Spleen (tissue), 13 donors: ENCODE measurements at regions of chr4 and their contacts with region 1.

Region 1: DNA sequence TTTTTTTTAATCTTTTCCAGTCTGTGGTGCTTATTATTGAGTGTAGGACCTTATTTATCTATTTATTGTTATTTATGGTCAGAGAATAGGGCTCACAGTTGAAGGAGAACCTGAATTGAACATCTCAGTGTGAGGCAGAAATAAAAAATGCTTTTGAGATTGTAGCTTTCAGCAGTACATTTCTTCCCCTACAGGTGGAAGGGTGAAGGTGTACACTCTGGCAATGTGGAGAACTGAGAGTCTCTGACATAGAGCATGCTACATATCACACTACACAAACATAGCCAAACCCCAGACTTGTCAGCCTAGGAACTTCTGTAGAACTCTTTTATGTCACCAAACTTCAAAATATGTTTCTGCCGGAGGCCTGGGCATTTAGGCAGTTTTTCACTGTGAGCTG is 140.2 kb downstream of the STIM2 start:
- DNase-seq: no peak
- H3K4me3 ChIP-seq: no peak overlapping the region
- H3K27ac ChIP-seq: no peak overlapping the region
- H3K4me1 ChIP-seq: peaks cover 0 to 36% (median 13%) of the 10 kb centered on the region in 6 donors
- H3K27me3 ChIP-seq: no peaks in the 10 kb centered on the region
- CTCF ChIP-seq: peak in 6 of 11 experiments; percentile 6 to 47 (median 24)
- POLR2A ChIP-seq: no peak

Region 2: DNA sequence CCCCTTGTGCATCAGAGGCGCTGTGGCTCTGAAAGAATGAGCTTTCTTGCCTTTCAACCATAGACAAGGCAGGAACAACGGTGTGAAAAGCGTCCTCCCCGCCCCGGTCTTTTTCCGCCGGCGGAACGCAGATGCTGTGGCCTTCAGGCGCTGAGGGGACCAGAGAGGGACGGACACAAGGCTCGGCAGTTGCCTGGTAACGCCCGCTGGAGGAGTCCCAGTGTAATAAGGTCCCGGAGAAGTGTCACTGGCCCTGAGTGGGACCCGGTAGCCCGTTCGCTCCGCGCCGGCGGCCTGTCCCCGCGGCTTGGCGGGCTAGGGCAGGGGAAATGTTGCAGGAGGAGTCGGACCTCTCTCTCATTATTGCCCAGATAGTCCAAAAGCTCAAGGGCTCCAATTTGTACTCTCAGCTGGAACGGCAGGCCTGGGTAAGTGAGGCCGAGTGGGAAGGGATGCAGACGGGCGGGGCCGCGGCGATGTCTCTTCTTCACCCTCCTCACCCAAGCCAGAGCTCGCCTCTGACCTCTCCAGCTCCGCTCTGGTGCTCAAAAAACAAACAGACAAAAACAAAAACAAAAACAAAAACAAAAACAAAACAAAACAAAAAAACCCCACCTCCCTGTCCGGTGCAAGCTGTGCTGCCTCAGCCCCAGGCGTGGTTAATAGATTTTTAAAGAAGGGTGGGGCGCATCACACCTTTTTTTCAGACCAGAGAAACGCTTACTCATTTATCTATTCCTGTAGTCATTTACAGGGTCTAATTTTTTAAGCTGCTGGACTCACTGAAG is 416.8 kb before region 1 on chr4 and contains the start of gene TBC1D19:
- intact Hi-C with region 1: loop called (anchors 10 kb)
- DNase-seq: peak; percentile 97
- H3K4me3 ChIP-seq: peak within 1 kb of the TSS; percentile 61 to 94 (median 76)
- H3K27ac ChIP-seq: peak within 1 kb of the TSS; percentile 67 to 92 (median 82)
- H3K4me1 ChIP-seq: peaks cover 8 to 27% (median 16%) of the 10 kb centered on the region in 6 donors
- H3K27me3 ChIP-seq: no peaks in the 10 kb centered on the region
- CTCF ChIP-seq: no peak
- POLR2A ChIP-seq: peak in 1 of 3 donors; percentile 28
- total RNA-seq, gene TBC1D19: 4.5 to 18.0 (median 9.4) TPM

Region 3: DNA sequence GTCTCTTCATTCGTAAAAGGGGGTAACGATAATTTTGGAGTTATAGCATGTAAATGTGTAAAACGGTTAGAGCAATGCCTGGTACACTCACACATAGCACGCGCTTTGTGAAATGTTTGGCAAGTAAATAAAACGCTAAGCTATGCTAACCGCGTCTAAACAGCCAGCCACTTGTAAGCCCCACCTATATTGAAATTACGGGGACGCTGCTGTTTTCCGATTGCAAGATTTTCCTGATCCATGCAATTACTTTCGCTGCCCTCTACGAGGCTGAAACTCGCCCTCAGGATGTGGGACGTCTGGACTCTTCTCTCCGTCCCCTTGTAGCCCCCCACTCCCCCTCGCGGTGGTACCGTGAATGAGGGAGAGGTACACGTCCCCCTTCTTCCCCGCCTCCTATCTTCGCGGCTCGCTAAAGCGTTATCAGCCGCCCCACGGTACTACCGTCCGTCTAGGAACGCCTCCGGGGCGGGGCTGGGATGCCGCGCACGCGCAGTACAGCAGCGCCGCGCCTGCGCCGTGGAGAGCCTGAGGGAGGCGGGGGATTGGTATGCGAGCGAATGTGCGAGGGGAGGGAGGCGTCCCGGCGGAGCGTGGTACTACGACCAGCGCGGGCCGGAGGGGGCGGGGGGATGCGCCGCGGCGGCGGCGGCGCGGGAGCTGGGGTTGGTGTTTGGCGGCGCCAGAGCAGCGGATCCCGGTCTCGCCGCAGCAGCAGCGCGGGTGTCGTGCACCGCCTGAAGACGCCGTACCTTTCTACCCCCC is 140.5 kb before region 1 on chr4 and contains the start of gene STIM2:
- intact Hi-C with region 1: loop called (anchors 5 kb)
- DNase-seq: peak; percentile 100
- H3K4me3 ChIP-seq: peak within 1 kb of the TSS; percentile 70 to 97 (median 92)
- H3K27ac ChIP-seq: peak within 1 kb of the TSS; percentile 97 to 99 (median 98)
- H3K4me1 ChIP-seq: peaks cover 29 to 71% (median 67%) of the 10 kb centered on the region in 6 donors
- H3K27me3 ChIP-seq: no peaks in the 10 kb centered on the region
- CTCF ChIP-seq: peak; percentile 36 to 83 (median 71)
- POLR2A ChIP-seq: peak; percentile 77 to 84 (median 82)
- total RNA-seq, gene STIM2: 44.3 to 66.6 (median 53.7) TPM